ENCODE measurements at regions of chr2 and their contacts with region 1.

Region 1: GRCh38 chr2:190648289-190649034 is 421 bp upstream of the NAB1 start:
- DNase-seq: peak; percentile 81
- H3K4me3 Mint-ChIP-seq: peak overlapping the region; percentile 73
- H3K27ac Mint-ChIP-seq: peak overlapping the region; percentile 29
- H3K4me1 Mint-ChIP-seq: peaks cover 31% of the 10 kb centered on the region
- H3K27me3 Mint-ChIP-seq: peaks cover 2% of the 10 kb centered on the region

Region 2: DNA sequence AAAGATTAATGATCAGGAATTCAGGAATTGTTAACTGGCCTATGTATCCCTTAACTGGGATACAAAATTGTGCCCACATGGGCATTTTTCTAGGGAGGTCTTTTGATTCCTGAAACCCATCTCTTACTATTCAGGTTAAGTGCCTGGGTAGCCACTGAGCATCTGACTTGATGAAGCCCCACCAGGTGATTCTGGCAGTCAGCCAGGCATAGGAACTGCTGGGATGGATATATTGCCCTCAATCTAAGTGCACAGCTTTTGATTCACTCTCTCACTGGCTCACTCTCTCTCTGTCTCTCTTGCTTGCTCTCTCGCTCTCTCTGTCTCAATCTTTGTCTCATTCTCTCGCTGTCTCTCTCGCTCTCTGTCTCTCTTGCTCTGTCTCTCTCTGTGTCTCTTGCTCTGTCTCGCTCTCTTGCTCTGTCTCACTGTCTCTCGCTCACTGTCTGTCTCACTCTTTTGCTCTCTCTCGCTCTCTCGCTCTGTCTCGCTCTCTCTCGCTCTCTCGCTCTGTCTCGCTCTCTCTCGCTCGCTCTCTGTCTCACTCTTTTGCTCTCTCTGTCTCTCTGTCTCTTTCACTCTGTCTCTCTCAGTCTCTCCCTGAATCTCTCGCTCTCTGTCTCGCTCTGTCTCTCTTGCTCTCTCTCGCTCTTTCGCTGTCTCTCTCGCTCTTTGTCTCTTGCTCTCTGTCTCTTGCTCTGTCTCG is 282.8 kb before region 1 on chr2:
- CTCF ChIA-PET with region 1: no interaction called
- POLR2A ChIA-PET with region 1: no interaction called
- DNase-seq: no peak
- H3K4me3 Mint-ChIP-seq: no peak overlapping the region
- H3K27ac Mint-ChIP-seq: no peak overlapping the region
- H3K4me1 Mint-ChIP-seq: peaks cover 10% of the 10 kb centered on the region
- H3K27me3 Mint-ChIP-seq: no peaks in the 10 kb centered on the region

Region 3: DNA sequence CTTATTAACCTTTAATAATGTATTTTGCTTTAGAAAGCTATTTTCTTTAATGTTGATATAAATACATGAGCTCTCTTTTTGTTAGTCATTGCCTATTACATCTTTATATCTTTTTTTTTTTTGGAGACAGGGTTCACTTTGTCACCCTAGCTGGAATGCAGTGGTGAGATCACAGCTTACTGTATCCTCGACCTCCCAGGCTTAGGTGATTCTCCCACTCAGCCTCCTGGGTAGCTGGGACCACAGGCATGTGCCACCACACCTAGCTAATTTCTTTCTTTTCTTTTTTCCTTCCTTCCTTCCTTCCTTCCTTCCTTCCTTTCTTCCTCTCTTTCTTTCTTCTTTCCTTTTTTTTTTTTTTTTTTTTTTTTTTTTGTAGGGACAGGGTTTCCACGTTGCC is 15.8 kb after region 1 on chr2:
- CTCF ChIA-PET with region 1: interaction called, 5 read pairs
- POLR2A ChIA-PET with region 1: interaction called, 17 read pairs
- DNase-seq: no peak
- H3K4me3 Mint-ChIP-seq: no peak overlapping the region
- H3K27ac Mint-ChIP-seq: no peak overlapping the region
- H3K4me1 Mint-ChIP-seq: peaks cover 19% of the 10 kb centered on the region
- H3K27me3 Mint-ChIP-seq: no peaks in the 10 kb centered on the region